ENCODE measurements at regions of chr6 and their contacts with region 1.

Region 1: GRCh38 chr6:30533460-30534294 is 22.6 kb downstream of the GNL1 start:
- DNase-seq: no peak
- H3K4me3 ChIP-seq: no peak overlapping the region
- H3K27ac ChIP-seq: no peak overlapping the region
- H3K4me1 ChIP-seq: peaks cover 6% of the 10 kb centered on the region
- H3K27me3 ChIP-seq: no peaks in the 10 kb centered on the region
- CTCF ChIP-seq: no peak
- POLR2A ChIP-seq: no peak

Region 2: GRCh38 chr6:30489081-30490025 is 44.3 kb before region 1 on chr6 and contains the start of gene HLA-E:
- CTCF ChIA-PET with region 1: interaction called, 87 read pairs
- POLR2A ChIA-PET with region 1: interaction called, 10 read pairs
- dilution Hi-C with region 1: no loop called
- intact Hi-C with region 1: loop called (anchors 1 kb)
- DNase-seq: peak; percentile 99
- H3K4me3 ChIP-seq: peak within 1 kb of the TSS; percentile 76 to 94 (median 92)
- H3K27ac ChIP-seq: peak within 1 kb of the TSS; percentile 92
- H3K4me1 ChIP-seq: peaks cover 20% of the 10 kb centered on the region
- H3K27me3 ChIP-seq: no peaks in the 10 kb centered on the region
- CTCF ChIP-seq: no peak
- POLR2A ChIP-seq: peak; percentile 99
- total RNA-seq, gene HLA-E: 249 and 271 TPM in 2 replicates

Region 3: GRCh38 chr6:30500421-30501355 is 33.0 kb before region 1 on chr6:
- CTCF ChIA-PET with region 1: interaction called, 73 read pairs
- POLR2A ChIA-PET with region 1: interaction called, 6 read pairs
- dilution Hi-C with region 1: no loop called
- intact Hi-C with region 1: loop called (anchors 1 kb)
- DNase-seq: peak; percentile 94
- H3K4me3 ChIP-seq: peak overlapping the region in 1 of 3 experiments; percentile 38
- H3K27ac ChIP-seq: peak overlapping the region; percentile 79
- H3K4me1 ChIP-seq: peaks cover 31% of the 10 kb centered on the region
- H3K27me3 ChIP-seq: no peaks in the 10 kb centered on the region
- CTCF ChIP-seq: no peak
- POLR2A ChIP-seq: no peak

Region 4: GRCh38 chr6:30508890-30509736 is 24.6 kb before region 1 on chr6:
- CTCF ChIA-PET with region 1: interaction called, 19 read pairs
- POLR2A ChIA-PET with region 1: no interaction called
- dilution Hi-C with region 1: no loop called
- intact Hi-C with region 1: no loop called
- DNase-seq: peak; percentile 28
- H3K4me3 ChIP-seq: no peak overlapping the region
- H3K27ac ChIP-seq: peak overlapping the region; percentile 88
- H3K4me1 ChIP-seq: peaks cover 12% of the 10 kb centered on the region
- H3K27me3 ChIP-seq: no peaks in the 10 kb centered on the region
- CTCF ChIP-seq: no peak
- POLR2A ChIP-seq: no peak

Measured in endothelial cell of umbilical vein (primary cell).